ENCODE measurements at regions of chr3 and their contacts with region 1.

Region 1: GRCh38 chr3:45938864-45939263 is 4.4 kb upstream of the CXCR6 start:
- ATAC-seq: peak; percentile 66 to 97 (median 87)
- H3K4me3 ChIP-seq: no peak overlapping the region
- H3K27ac ChIP-seq: peak overlapping the region in 1 of 2 donors; percentile 31
- H3K4me1 ChIP-seq: peaks cover 0 to 2% of the 10 kb centered on the region in 2 donors

Region 2: GRCh38 chr3:45760878-45761711 is 177.8 kb before region 1 on chr3:
- in situ Hi-C with region 1: loop called in 1 of 9 experiments (anchors 25 kb)
- ATAC-seq: peak; percentile 70 to 95 (median 82)
- H3K4me3 ChIP-seq: no peak overlapping the region
- H3K27ac ChIP-seq: no peak overlapping the region
- H3K4me1 ChIP-seq: no peaks in the 10 kb centered on the region

Region 3: DNA sequence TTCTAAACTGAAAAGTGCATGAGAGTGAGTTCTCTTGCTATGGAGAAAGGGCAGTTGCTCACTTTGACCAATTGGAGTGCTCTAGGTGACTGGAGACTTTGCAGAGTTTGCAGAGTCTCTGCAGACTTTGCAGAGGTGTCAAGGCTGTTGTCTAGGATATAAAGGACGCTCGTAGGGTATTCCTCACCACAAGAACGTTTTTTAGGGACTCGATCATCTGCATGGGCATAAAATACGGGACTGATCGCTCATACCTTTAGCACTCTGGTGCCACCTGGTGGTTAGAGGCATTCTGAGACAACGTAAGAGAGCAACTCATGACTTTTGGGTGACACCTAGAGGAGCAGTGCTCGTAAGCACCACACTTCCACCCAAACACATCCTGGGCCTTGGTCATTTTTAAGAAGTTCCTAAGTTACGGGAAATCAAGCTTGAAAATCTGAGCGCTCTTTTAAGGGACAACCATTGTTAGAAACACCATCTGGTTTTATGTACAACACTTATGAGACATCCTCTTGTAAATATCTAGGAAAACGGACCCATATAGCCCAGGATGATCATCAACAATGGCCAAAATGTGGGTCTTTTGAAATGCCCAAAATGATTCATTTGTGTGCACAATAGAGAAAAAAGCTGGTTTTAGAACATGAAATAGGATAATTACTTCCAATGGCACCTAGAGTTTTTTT is 140.0 kb after region 1 on chr3:
- in situ Hi-C with region 1: loop called in 4 of 9 experiments (anchors 5 to 25 kb)
- ATAC-seq: peak; percentile 83 to 100 (median 94)
- H3K4me3 ChIP-seq: no peak overlapping the region
- H3K27ac ChIP-seq: no peak overlapping the region
- H3K4me1 ChIP-seq: no peaks in the 10 kb centered on the region

Region 4: GRCh38 chr3:46135475-46135874 is 196.6 kb after region 1 on chr3:
- in situ Hi-C with region 1: no loop called
- ATAC-seq: peak in 2 of 8 experiments; percentile 99
- H3K4me3 ChIP-seq: no peak overlapping the region
- H3K27ac ChIP-seq: no peak overlapping the region
- H3K4me1 ChIP-seq: no peaks in the 10 kb centered on the region

Region 5: DNA sequence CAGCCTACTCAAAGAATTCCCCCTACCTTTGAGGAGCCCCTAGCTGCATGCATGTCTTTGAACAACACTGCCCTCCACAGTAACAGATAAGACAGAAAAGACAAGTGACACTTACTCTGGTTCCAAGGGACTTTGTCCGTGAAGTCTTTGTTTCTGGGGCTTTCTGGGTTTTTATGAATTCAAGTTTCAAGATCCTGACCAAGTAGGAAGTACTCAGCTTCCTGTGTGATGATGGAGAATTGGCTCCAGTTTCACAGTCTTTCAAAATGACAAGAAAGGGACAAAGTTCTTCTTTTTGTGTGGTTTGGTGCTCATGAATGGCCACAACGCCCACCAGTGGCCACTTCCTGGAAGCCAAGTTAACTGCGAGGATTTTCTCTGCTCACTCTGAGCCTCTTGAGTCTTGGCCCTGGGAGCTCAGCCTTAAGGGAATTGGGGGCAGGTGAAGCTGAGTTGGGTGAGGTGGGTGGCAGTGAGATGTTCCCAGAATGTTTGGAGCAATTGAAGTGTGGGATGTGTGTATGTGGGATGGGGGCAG is 269.4 kb after region 1 on chr3 and contains the start of gene CCR1:
- in situ Hi-C with region 1: loop called in 1 of 9 experiments (anchors 25 kb)
- ATAC-seq: peak in 3 of 8 experiments; percentile 19 to 79 (median 68)
- H3K4me3 ChIP-seq: no peak within 1 kb of the TSS
- H3K27ac ChIP-seq: no peak within 1 kb of the TSS
- H3K4me1 ChIP-seq: no peaks in the 10 kb centered on the region
- total RNA-seq, gene CCR1: 0.04 to 0.33 (median 0.07) TPM in 4 of 8 experiments, not detected in the others

Region 6: GRCh38 chr3:46368569-46368968 is 429.7 kb after region 1 on chr3:
- in situ Hi-C with region 1: loop called in 1 of 9 experiments (anchors 25 kb)
- ATAC-seq: peak in 1 of 8 experiments; percentile 64
- H3K4me3 ChIP-seq: no peak overlapping the region
- H3K27ac ChIP-seq: no peak overlapping the region
- H3K4me1 ChIP-seq: no peaks in the 10 kb centered on the region

Region 7: DNA sequence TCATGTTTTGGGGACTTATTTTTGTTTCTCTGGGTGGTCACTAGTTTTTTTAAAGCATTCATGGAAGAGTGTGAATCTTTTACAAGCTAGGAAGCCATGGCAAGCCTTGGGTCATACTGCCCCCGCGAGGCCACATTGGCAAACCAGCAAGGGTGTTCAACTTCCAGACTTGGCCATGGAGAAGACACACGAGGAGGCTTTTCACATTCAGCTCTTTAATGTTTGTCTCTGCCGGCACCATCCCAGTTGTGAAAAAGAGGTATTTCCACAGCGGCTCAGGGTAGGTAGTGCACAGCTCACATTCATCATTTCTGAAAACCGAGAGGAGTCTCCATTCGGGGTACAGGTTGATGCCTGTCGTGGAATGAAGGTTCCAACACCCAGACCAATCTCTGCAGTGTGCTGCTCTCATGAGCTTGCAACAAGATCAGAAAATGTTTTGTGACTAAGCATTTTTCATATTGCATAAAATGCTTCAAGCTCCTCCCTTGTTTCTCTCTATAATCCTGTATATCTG is 439.6 kb after region 1 on chr3:
- in situ Hi-C with region 1: loop called in 2 of 9 experiments (anchors 25 kb)
- ATAC-seq: peak in 4 of 8 experiments; percentile 52 to 94 (median 90)
- H3K4me3 ChIP-seq: no peak overlapping the region
- H3K27ac ChIP-seq: no peak overlapping the region
- H3K4me1 ChIP-seq: no peaks in the 10 kb centered on the region

Region 8: GRCh38 chr3:46574243-46574646 is 635.4 kb after region 1 on chr3:
- in situ Hi-C with region 1: no loop called
- ATAC-seq: peak in 3 of 8 experiments; percentile 55 to 74 (median 63)
- H3K4me3 ChIP-seq: no peak overlapping the region
- H3K27ac ChIP-seq: no peak overlapping the region
- H3K4me1 ChIP-seq: peaks cover 0 to 5% of the 10 kb centered on the region in 2 donors